Heart right ventricle (tissue), 16 donors: ENCODE measurements at regions of chr16 and their contacts with region 1.

Region 1: DNA sequence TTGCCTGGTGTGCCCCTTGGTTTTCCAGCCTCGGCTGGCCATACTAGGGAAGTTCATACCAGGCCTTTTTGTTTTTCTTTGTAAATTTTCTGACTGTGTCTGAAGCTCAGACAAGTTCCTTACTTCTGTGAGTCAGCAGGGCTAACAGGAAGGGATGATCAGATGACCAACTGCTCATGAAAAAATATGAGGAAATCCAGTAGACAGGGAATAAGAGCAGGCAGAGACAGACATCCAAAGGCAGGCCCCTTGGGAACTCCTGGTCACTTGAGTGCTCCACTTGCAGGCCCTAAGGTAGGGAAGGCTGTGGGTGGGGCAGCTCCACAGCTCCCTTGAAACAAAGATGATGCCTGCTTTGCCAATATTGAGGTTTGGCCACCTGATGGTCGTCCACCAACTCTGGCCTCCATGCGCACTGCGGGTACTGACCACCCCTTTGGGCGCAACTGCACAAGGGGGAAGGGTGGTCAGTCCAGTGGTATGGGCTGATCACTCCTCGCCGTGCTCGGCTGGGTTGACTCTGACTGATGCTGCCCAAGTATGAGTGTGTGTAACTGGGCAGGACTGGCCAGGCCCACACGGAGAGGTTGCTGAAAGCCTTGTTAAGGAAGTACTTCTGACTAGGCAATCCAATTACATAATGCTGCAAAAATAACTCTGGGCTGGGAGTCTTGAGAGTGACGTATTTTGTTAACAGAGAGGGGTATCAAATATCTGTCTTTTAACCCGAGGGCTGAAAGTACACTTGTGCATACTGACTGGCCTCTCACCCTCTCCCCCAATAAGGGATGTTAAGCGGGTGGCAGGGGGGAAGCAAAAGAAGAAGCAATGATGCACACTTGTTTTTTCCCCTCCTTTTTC is 20.8 kb upstream of the ZFHX3 start:
- DNase-seq: peak; percentile 57 to 79
- ATAC-seq: peak; percentile 73 to 85 (median 78)
- H3K4me3 ChIP-seq: peak overlapping the region in 1 of 10 donors; percentile 9
- H3K27ac ChIP-seq: peak overlapping the region; percentile 47 to 95 (median 86)
- H3K4me1 ChIP-seq: peaks cover 25 to 76% (median 60%) of the 10 kb centered on the region in 9 donors
- H3K27me3 ChIP-seq: peaks cover 0 to 43% (median 31%) of the 10 kb centered on the region in 7 donors
- CTCF ChIP-seq: no peak

Region 2: DNA sequence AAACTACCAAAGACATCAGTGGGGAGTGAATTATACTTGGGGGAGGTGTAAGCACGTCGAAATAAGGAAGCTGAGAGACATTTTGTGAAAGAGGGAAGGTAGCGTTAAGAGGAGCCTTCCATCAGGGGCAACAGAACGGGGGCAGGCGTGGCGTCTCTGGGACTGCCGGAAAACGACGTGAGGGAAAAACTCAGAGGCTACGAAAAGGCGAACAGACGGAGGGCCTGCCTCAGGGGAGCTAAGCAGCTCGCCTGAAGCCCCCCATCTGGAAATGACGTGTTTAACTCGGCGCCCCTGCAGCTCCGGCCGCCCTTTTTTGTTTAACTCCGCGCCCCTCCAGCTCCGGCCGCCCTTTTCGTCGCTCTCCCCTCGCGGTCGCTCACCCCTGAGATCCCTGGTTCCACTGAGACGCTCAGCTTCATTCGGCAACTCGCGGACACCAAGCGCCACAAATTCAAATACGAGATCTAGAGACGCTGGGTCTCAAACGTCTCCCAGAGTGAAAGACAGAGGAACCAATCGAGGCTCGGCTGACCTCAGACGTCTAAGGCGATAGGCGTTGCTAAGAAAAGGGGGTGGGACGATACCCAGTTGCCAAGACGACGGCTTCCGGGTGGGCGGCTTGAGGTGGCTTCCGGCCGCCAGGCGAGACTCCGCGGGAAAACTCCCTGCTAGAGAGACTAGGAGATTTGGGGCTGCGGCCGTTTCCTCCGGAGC is 404.1 kb before region 1 on chr16:
- intact Hi-C with region 1: loop called in 1 of 10 experiments (anchors 10 kb)
- DNase-seq: peak; percentile 88 to 98
- ATAC-seq: peak; percentile 100
- H3K4me3 ChIP-seq: peak overlapping the region; percentile 67 to 93 (median 74)
- H3K27ac ChIP-seq: peak overlapping the region in 4 of 10 donors; percentile 24 to 87 (median 32)
- H3K4me1 ChIP-seq: peaks cover 0 to 19% (median 10%) of the 10 kb centered on the region in 9 donors
- H3K27me3 ChIP-seq: peaks cover 0 to 4% (median 0%) of the 10 kb centered on the region in 7 donors
- CTCF ChIP-seq: peak in 1 of 9 donors; percentile 22

Region 3: DNA sequence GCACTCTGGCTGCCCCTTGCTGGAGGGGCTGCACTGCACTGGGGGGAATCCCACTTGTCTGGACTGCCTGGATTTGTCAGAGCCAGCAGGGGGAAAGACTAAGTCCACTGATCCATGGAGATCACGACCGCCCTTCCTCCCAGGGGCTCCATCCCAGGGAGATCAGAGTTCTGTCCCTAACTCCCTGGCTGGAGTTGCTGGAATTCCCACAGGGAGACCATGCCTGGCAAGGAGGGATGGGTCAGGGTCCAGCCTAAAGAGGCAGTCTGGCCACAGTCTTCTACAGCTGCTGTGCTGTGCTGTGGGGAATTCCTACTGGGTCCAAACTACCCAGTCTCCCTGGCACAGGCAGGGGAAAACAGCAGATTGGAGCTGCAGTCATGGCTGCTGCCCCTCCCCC is 332.7 kb before region 1 on chr16:
- intact Hi-C with region 1: no loop called
- DNase-seq: no peak
- ATAC-seq: no peak
- H3K4me3 ChIP-seq: no peak overlapping the region
- H3K27ac ChIP-seq: no peak overlapping the region
- H3K4me1 ChIP-seq: peaks cover 0 to 6% (median 0%) of the 10 kb centered on the region in 9 donors
- H3K27me3 ChIP-seq: no peaks in the 10 kb centered on the region
- CTCF ChIP-seq: no peak

Region 4: DNA sequence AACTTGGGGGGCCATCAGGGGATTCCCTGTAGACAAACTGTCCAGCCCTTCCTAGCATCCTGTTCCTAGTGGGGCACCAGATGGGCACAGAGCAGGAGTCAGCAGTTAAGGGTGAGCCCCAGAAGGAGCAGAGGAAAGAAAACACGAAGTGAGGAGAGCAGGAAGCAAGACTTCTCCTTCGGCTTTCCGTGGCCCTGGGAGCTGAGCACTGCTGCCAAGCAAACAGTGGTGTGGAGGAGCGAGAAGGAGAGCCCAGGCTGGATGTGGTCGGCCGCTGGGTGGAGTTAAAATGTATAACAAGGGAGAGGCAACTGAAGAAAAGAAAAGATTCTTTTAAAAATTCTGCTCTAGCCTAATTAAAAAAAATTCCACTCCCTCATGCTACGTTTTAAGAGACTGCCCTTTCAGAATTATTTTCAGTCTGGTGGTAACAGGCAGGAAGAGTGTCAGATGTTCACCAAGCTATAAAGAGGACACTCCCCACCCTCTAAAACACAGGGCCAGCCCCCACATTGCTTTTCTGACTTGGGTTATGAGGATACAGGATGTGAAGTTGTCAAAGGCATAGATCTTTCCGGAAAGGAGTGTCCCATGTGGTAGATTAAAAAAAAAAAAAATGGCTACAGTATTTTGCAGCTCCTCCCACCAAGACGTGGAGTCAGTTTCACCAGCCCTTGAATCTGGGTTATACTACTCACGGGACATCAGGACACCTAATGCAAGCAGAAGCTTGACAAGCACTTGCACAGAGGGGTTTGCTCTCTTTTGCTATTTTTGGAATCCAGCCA is 54.0 kb after region 1 on chr16:
- intact Hi-C with region 1: loop called in 1 of 10 experiments (anchors 5 kb)
- DNase-seq: peak; percentile 53 to 56
- ATAC-seq: peak; percentile 65 to 91 (median 78)
- H3K4me3 ChIP-seq: peak overlapping the region in 2 of 10 donors; percentile 15 to 18
- H3K27ac ChIP-seq: peak overlapping the region; percentile 42 to 88 (median 74)
- H3K4me1 ChIP-seq: peaks cover 0 to 47% (median 13%) of the 10 kb centered on the region in 9 donors
- H3K27me3 ChIP-seq: no peaks in the 10 kb centered on the region
- CTCF ChIP-seq: peak in 3 of 9 donors; percentile 8 to 29 (median 18)

Region 5: GRCh38 chr16:73131156-73131862 is 62.5 kb after region 1 on chr16:
- intact Hi-C with region 1: loop called in 1 of 10 experiments (anchors 10 kb)
- DNase-seq: no peak
- ATAC-seq: no peak
- H3K4me3 ChIP-seq: no peak overlapping the region
- H3K27ac ChIP-seq: no peak overlapping the region
- H3K4me1 ChIP-seq: peaks cover 0 to 6% (median 0%) of the 10 kb centered on the region in 9 donors
- H3K27me3 ChIP-seq: no peaks in the 10 kb centered on the region
- CTCF ChIP-seq: no peak

Region 6: GRCh38 chr16:73145166-73145880 is 76.6 kb after region 1 on chr16:
- intact Hi-C with region 1: no loop called
- DNase-seq: no peak
- ATAC-seq: no peak
- H3K4me3 ChIP-seq: no peak overlapping the region
- H3K27ac ChIP-seq: peak overlapping the region in 3 of 10 donors; percentile 71 to 77 (median 75)
- H3K4me1 ChIP-seq: peaks cover 0 to 19% (median 4%) of the 10 kb centered on the region in 9 donors
- H3K27me3 ChIP-seq: no peaks in the 10 kb centered on the region
- CTCF ChIP-seq: no peak

Region 7: DNA sequence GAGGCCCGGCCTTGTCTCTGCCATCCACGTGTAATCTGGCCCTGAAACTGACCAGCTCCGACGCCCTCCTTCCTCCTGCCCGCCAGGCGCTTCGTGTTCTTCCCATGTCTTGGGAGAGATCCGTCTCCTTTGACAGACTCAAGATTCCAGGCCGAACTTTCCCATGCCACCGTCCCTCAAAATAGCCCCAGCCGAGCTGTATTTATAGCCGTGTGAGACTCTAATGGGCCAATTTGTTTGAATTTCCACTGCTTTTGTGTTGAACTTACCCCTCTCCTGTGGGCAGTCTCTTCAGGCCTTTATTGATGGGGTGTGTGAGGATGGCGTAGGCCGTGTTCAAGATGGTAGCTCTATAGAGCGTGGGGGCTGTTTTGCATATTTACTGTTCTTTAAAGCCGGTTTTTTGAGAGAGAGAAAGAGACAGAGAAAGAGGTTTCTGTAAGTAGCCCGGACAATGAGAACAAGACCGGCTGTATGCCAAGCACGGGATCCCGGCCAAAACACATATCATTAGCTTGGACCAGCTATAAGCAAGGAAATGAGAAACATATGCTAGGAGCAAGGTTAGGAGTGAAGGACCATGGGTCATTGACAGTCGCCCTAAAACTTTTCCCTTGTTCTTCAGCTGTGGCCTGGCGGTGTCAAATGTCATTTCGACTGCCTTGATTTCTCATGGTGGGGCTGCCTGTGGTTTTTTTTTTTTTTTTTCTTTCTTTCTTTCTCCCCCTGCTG is 103.6 kb after region 1 on chr16:
- intact Hi-C with region 1: loop called in 6 of 10 experiments (anchors 5 to 10 kb)
- DNase-seq: peak; percentile 82 to 86
- ATAC-seq: peak; percentile 68 to 87 (median 78)
- H3K4me3 ChIP-seq: peak overlapping the region in 1 of 10 donors; percentile 1
- H3K27ac ChIP-seq: peak overlapping the region; percentile 41 to 86 (median 70)
- H3K4me1 ChIP-seq: peaks cover 0 to 42% (median 16%) of the 10 kb centered on the region in 9 donors
- H3K27me3 ChIP-seq: no peaks in the 10 kb centered on the region
- CTCF ChIP-seq: peak in 8 of 9 donors; percentile 5 to 50 (median 36)